AG04449 (cell line): ENCODE measurements at regions of chr4 and their contacts with region 1.

Region 1: GRCh38 chr4:80215449-80216052 is 18.2 kb downstream of the PRDM8 start:
- DNase-seq: no peak
- H3K4me3 ChIP-seq: no peak overlapping the region
- CTCF ChIP-seq: peak; percentile 48

Region 2: GRCh38 chr4:80202190-80202711 is 13.3 kb before region 1 on chr4:
- CTCF ChIA-PET with region 1: interaction called, 47 read pairs
- POLR2A ChIA-PET with region 1: no interaction called
- DNase-seq: no peak
- H3K4me3 ChIP-seq: peak overlapping the region; percentile 63
- CTCF ChIP-seq: peak; percentile 88

Region 3: DNA sequence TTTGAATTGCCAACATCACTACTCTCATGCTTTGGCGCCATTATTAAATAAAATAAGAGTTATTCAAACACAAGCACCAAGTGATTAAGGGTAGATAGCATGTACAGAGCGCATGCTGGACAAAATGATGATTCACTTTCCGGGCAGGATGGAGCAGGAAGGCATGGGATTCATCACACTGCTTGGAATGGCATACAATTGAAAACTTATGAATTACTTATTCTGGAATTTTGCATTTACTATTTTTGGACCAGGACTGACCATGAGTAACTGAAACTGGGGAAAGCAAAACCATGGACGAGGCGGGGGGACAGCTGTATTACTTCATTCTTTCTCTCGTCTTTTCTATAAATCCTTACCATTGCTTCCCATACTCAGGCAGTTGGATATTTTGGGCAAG is 22.4 kb after region 1 on chr4:
- CTCF ChIA-PET with region 1: interaction called, 78 read pairs
- POLR2A ChIA-PET with region 1: no interaction called
- DNase-seq: peak; percentile 87
- H3K4me3 ChIP-seq: peak overlapping the region; percentile 23; the same call in 1 of the 2 replicates
- CTCF ChIP-seq: no peak

Region 4: DNA sequence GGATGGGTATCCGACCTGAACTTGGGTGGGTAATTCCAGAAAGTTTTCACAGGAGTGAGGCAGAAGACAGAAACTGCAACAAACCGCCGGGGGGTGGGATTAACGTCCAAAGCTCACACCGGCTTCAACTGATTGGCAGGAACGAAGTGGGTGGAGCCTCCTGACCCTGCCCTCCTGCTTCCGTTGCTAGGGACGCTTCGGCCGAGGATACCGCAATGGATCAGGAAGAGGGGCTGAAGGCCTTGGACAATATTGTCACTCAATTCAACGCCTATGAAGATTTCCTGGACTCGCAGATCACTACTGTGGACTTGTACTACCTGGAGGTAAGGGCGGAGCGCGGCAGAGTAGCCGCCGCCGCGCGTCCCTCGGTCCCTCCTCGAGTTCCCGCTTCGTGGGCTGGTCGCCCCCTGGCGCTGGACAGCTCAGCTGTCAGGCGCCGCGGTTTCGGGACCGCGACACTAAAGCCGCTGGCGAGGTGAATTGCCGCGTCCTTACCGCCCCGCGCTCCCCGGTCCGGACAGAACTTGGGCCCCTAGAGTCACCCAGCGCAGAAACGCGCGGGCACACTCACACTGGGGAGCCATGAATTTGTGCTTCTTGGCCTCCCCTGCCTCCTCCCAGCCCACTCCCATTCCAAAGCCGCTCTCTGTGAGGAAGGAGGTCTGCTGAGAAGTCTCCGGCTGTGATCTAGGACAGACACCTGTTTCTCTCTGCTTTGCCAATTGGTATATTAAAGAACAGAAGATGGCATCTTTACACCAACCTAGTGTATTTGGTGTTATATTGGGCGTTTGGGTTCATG is 120.2 kb after region 1 on chr4 and contains the start of gene CFAP299:
- CTCF ChIA-PET with region 1: interaction called, 116 read pairs
- POLR2A ChIA-PET with region 1: no interaction called
- DNase-seq: no peak
- H3K4me3 ChIP-seq: peak within 1 kb of the TSS; percentile 81
- CTCF ChIP-seq: peak; percentile 75